Breast epithelium (tissue), 4 donors: ENCODE measurements at regions of chr19 and their contacts with region 1.

Region 1: DNA sequence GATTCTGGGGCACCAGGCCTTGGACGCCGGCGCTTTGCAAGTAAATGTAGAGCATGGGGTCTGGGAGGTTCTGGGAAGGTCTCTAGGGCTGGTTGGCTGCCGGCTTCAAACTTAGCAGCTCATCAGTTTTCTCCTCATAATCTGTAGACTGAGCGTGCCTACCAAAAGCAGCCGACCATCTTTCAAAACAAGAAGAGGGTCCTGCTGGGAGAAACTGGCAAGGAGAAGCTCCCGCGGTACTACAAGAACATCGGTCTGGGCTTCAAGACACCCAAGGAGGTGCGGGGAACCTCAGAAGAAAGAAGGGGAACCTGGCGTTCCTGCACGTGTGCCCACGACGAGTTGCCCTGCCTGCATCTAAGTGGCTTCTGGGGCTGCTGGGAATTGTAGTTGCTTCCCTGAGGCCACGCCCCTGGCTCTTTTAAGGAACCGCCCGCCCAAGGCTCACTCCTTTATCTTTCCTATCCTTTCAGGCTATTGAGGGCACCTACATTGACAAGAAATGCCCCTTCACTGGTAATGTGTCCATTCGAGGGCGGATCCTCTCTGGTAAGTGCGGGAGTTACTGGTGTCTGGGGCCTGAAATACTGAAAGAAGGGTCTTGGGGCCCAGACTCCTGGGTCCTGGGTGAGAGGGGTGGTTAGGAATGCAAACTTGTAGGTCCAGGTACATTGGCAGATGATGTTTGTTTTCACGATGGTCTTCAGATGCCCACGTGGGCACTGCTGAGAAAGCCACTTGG is 984 bp downstream of the RPS11 start:
- DNase-seq: no peak
- H3K4me3 ChIP-seq: peak overlapping the region; percentile 57 to 73 (median 66)
- H3K27ac ChIP-seq: peak overlapping the region; percentile 95 to 97
- H3K4me1 ChIP-seq: peaks cover 3 to 14% of the 10 kb centered on the region in 2 donors
- H3K27me3 ChIP-seq: no peaks in the 10 kb centered on the region
- CTCF ChIP-seq: no peak
- POLR2A ChIP-seq: no peak

Region 2: DNA sequence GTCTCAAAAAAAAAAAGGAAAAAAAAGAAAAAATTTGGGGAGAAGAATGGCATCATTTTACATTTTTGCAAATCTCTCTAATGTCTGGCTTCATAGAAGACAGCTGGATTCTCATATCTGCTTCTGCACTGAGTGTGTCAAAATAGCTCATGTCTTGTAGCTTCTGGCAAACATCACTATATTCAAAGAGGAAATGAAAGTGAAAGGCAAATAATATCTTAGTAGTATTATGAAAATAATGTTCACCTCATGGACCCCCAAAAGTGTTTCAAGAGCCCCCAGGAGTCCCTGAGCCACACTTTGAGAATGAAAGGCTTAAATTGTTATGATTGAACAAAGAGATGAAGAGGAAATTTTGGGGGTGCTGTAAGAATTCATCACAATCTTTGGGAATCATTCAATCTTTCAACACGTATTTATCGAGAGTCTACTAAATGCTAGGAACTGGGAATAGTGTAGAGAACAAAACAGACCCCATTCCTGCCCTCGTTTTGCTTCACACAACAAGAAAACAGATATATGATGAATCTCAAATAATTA is 171.0 kb before region 1 on chr19:
- intact Hi-C with region 1: no loop called
- DNase-seq: no peak
- H3K4me3 ChIP-seq: no peak overlapping the region
- H3K27ac ChIP-seq: no peak overlapping the region
- H3K4me1 ChIP-seq: no peaks in the 10 kb centered on the region
- H3K27me3 ChIP-seq: no peaks in the 10 kb centered on the region
- CTCF ChIP-seq: no peak
- POLR2A ChIP-seq: no peak

Region 3: DNA sequence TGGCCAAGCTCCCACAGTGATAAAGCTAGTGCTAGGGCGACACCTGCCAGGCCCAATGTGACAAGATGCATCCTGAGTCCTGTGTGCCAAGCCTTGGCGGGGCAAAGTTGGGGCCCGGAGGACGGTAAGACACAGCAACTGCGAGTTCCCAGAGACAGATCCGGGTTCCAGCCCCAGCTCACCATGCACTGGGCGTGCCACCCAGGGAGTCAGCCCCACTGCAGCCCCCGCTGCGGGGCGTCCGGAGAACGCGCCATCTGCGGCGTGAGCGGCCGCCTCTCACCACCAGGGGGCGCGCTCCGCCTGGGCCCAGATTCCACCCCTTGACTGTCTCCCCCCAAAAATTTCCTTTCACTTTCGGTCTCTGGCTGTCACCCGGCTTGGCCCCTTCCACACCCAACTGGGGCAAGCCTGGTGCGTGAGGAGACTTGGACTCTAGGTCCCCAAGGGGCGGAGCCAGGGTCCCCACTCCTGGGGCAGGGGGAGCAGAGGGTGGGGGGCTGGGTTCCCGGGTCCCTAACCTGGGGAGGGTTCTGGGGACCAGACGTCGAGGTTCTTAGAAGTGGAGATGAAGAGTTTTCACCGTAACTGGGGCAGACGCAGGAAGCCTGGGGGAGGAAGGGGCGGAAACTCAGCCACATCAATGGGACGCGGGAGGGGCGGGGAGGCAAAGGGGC is 23.2 kb before region 1 on chr19 and contains the start of gene FLT3LG:
- intact Hi-C with region 1: no loop called
- DNase-seq: peak; percentile 74 to 79
- H3K4me3 ChIP-seq: peak within 1 kb of the TSS; percentile 77 to 84 (median 82)
- H3K27ac ChIP-seq: peak within 1 kb of the TSS; percentile 79 to 83
- H3K4me1 ChIP-seq: no peaks in the 10 kb centered on the region
- H3K27me3 ChIP-seq: no peaks in the 10 kb centered on the region
- CTCF ChIP-seq: peak; percentile 97 to 99 (median 98)
- POLR2A ChIP-seq: no peak
- total RNA-seq, gene FLT3LG: 4.3 to 7.0 (median 4.6) TPM

Region 4: DNA sequence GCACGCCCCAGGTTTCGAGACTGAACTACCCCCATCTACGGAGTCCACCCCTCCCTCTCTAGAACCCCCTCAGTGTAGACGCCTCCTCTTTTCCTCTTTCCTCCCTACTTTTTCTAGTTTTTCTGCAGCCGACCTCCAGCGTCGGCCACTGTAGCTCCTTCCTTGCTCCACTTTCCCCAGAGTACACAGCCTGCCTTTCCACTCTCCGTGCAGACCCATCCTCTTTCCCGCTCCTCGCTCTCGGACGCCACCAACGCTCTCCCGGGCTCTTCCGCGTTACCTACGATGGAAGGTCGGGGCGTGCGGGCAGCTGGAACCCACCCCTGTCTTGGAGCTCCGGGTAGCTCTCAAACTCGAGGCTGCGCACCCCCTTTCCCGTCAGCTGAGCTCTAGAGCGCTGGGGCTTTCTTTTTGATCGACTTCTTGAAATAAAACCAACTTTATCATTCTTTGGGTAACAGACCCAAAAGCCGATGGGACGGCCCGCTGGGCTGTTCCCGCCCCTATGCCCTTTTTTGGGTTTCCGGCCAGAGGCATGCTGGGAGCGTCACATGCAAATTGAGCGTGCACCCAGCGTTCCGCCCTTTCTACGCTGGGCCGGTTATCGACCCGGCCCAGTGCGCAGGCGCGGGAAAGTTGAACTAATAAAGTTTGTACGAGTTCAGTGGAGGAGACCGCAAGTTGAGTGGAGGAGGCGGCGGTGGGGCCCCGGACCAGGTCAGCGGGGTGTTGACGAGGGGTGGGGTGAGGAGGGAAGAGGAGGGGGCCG is 168.3 kb after region 1 on chr19 and contains the starts of genes BCL2L12 and IRF3:
- intact Hi-C with region 1: loop called (anchors 10 kb)
- DNase-seq: peak; percentile 95 to 97
- H3K4me3 ChIP-seq: peak within 1 kb of the TSS; percentile 70 to 79 (median 77)
- H3K27ac ChIP-seq: peak within 1 kb of the TSS; percentile 88 to 93
- H3K4me1 ChIP-seq: peaks cover 6 to 7% of the 10 kb centered on the region in 2 donors
- H3K27me3 ChIP-seq: no peaks in the 10 kb centered on the region
- CTCF ChIP-seq: no peak
- POLR2A ChIP-seq: peak; percentile 77
- total RNA-seq, gene BCL2L12: 5.1 to 11.7 (median 8.5) TPM
- total RNA-seq, gene IRF3: 39.7 to 100 (median 52.4) TPM